ENCODE measurements at regions of chr20 and their contacts with region 1.

Region 1: DNA sequence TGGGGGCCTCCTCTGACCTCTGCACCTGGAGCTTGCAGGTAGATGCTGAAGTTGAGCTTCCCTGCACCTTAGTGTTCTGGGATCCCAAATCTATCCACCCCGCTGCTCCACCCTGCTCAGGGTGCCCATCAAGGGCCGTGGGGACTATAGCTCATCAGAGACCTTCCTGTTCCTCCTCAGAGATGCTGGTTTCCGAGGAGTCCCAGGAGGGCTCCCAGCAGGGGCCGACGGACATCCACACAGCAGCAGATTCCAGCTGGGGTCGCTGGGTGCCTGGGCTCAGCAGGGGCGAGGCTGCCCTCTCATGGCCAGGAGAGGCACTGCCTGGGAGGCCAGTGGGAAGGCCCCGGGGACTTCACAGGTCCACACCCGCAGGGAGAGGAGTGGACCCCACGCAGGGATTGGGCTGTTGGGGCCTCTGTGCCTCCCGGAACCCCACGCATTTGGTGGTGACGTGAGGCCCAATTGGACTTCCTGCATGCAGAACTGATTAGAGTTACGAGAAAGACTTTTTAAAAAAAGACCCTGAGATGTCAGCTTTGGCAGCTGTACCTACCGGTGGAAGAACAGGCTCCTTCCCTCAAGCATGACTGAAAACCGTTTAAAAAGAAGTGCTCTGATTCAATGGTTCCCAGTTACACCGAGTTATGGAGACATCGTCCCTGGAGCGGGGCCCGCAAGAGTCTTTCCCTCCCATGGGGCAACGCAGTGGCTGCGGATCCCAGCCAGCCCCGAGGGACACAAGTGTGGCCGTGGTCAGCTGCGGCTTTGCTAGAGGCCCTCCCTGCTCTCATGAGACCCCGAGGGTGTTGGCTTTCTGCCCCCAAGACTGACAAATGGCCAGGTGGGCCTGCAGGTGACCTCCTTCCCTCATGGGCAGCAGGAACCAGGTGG is 25.3 kb upstream of the SLCO4A1 start:
- DNase-seq: peak; percentile 71
- ATAC-seq: peak; percentile 97
- H3K4me3 ChIP-seq: peak overlapping the region in 1 of 3 experiments; percentile 57; a peak in 1 of 6 replicates
- H3K27ac ChIP-seq: no peak overlapping the region
- H3K4me1 ChIP-seq: peaks cover 38% of the 10 kb centered on the region
- H3K27me3 ChIP-seq: peaks cover 5 to 52% of the 10 kb centered on the region in 2 experiments; a peak in 4 of 5 replicates
- CTCF ChIP-seq: peak; percentile 100
- EP300 ChIP-seq: no peak; a peak in 1 of 4 replicates
- POLR2A ChIP-seq: no peak
- RAD21 ChIP-seq: peak; percentile 99

Region 2: DNA sequence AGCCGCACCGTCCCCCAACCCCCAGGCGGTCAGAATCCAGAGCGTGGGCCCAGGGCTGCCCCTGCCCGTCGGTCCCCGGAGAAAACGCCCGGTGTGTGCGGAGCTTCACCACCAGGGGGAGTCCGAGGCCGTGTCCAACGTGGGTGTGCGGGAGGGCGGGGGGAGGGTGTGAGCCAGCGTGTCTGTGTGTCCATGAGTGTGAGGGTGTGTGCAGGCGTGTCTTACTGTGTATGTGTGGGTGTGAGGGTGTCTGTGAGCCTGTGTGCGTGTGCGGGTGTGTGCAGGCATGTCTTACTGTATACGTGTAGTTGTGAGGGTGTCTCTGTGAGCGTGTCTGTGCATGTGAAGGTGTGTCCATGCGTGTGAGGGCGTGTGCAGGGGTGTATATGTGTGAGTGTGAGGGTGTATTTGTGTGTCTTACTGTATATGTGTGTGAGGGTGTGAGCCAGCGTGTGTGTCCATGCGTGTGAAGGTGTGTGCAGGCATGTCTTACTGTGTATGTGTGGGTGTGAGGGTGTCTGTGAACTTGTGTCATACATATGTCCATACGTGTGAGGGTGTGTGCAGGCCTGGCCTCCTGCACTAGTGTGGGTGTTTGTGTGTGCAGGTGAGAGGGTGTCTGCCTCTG is 116.6 kb before region 1 on chr20:
- CTCF ChIA-PET with region 1: interaction called, 27 read pairs
- POLR2A ChIA-PET with region 1: interaction called, 6 read pairs
- in situ Hi-C with region 1: loop called (anchors 5 kb)
- intact Hi-C with region 1: loop called (anchors 1 kb)
- DNase-seq: peak; percentile 56
- ATAC-seq: peak; percentile 70
- H3K4me3 ChIP-seq: no peak overlapping the region
- H3K27ac ChIP-seq: no peak overlapping the region
- H3K4me1 ChIP-seq: no peaks in the 10 kb centered on the region
- H3K27me3 ChIP-seq: peaks cover 14 to 52% of the 10 kb centered on the region in 2 experiments
- CTCF ChIP-seq: peak; percentile 99
- EP300 ChIP-seq: no peak
- POLR2A ChIP-seq: no peak
- RAD21 ChIP-seq: peak; percentile 89

Region 3: DNA sequence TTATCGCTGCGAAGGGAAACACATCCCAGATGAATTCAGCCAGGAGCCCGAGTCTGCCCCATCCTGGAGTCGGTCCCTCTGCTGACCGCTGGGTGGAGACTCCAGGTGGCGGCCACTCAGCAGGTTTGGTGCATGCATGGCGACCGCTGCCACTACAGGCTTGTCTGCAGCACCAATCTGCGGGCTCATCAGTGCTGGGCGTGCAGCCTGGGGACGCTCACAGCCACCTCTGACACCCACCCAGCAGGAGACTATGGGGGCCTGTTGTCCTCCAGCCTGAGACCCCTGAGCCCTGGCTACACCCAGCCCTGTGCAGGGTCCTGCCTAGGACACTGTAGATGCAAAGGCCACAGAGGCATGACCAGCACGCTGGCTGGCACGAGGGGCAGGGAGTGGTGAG is 100.6 kb before region 1 on chr20:
- CTCF ChIA-PET with region 1: interaction called, 25 read pairs
- POLR2A ChIA-PET with region 1: no interaction called
- in situ Hi-C with region 1: no loop called
- intact Hi-C with region 1: loop called (anchors 1 kb)
- DNase-seq: peak; percentile 57
- ATAC-seq: peak; percentile 91
- H3K4me3 ChIP-seq: no peak overlapping the region
- H3K27ac ChIP-seq: no peak overlapping the region
- H3K4me1 ChIP-seq: 0 out of 2 replicates have a peak, but pooled peaks cover 5% of the 10 kb centered on the region
- H3K27me3 ChIP-seq: peaks cover 28 to 81% of the 10 kb centered on the region in 2 experiments
- CTCF ChIP-seq: peak; percentile 89
- EP300 ChIP-seq: no peak
- POLR2A ChIP-seq: no peak
- RAD21 ChIP-seq: peak; percentile 90

Region 4: DNA sequence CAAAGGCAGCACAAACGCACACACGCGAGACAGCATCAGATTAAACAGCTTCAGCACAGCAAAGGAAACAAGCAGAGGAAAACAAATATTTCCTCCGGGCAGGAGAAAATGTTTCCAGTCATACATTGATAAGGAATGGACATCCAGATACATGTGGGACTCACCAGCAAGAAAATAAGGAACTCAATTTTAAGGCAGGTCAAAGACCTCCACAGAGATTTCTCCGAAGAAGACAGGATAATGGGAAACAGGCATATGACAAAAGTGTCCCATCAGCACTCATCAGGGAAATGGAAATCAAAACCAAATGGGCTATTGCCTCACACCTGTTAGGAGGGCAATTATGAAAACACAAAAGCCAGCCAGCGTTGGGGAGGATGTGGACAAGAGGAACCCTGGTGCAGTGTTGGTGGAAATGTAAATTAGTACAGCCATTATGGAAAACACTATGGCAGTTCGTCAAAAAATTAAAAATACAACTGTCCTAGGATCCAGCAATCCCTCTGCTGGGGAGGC is 15.7 kb after region 1 on chr20:
- CTCF ChIA-PET with region 1: no interaction called
- POLR2A ChIA-PET with region 1: no interaction called
- in situ Hi-C with region 1: no loop called
- intact Hi-C with region 1: no loop called
- DNase-seq: no peak
- ATAC-seq: no peak
- H3K4me3 ChIP-seq: no peak overlapping the region
- H3K27ac ChIP-seq: no peak overlapping the region
- H3K4me1 ChIP-seq: peaks cover 72% of the 10 kb centered on the region
- H3K27me3 ChIP-seq: peaks cover 31 to 84% of the 10 kb centered on the region in 2 experiments
- CTCF ChIP-seq: no peak
- EP300 ChIP-seq: no peak
- POLR2A ChIP-seq: no peak
- RAD21 ChIP-seq: no peak

Measured in HepG2 (cell line).